MCF 10A (cell line): ENCODE measurements at regions of chr1 and their contacts with region 1.

Region 1: DNA sequence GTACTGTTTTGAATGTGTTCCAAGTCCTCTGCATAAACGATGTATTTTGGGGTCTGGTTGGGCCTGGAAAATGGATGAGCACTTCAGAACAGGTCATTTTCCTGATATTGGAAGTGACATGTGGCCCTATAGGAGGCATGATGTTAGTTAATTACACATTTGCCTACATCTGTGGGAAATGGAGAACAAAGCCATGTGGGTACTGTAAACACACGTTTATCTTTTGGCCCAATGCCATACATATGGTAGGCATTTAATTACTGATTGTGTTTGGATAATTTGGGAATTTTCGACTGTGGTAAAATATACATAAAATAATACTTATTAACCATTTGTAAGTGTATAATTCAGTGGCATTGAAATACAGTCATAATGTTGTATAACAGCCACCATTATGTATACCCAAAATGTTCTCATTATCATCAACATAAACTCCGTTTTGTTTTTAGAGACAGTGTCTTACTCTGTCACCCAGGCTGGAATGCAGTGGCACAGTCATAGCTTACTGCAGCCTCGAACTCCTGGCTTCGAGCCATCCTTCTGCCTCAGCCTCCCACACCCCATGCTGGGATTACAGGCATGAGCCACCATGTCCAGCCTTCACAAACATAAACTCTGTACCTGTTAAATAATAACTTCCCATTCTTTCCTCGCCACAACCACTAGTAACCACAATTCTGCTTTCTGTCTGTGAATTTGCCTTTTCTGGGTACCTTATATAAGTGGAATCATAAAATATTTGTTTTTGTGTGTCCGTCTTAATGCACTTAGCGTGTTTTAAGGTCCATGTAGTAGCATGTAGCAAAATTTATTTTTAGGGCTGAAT is 11.9 kb upstream of the RNPEP start:
- DNase-seq: no peak
- H3K4me3 Mint-ChIP-seq: no peak overlapping the region
- H3K27ac Mint-ChIP-seq: no peak overlapping the region
- H3K4me1 Mint-ChIP-seq: peaks cover 15% of the 10 kb centered on the region
- H3K27me3 Mint-ChIP-seq: peaks cover 8% of the 10 kb centered on the region
- CTCF ChIP-seq: no peak

Region 2: DNA sequence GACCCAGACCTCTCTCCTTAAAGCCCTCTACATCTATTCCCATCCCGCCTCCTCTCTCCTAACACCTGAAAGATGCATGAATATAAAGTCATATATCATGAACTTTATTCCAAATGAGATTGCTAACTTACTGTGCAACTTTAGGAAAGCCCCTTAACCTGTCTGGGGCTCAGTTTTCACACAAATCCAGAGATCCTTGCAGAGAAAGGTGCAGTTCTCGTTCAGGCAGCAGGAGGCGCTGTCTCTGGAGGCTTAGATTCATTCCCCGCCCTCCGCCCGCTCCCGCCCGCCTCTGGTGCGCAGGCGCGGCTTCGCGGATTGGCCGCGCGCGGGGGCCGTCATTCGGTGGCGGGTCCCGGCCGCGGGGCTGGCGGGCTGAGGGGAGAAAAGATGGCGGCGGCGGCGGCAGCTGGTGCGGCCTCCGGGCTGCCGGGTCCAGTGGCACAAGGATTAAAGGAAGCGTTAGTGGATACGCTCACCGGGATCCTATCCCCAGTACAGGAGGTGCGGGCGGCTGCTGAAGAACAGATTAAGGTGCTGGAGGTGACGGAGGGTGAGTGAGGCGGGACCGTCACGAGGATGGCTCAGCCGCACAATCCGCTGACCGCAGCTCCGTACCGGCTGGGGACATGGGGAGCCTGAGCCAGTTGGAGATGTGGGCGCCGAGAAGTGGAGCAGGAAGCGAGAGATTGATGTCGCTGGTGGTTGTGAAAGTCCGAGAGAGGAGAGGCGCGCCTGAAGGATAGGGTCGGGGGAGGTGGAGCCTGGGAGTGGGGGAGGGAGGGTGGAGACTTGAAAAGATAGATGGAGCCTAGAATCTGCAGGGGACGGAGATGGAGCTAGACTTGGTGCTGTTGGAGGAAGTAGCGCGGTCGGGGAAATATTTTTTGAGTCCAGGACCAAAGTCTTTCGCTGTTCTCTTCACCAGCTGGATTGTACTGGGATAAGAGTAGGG is 141.4 kb before region 1 on chr1 and contains the start of gene IPO9:
- CTCF ChIA-PET with region 1: interaction called, 15 read pairs
- POLR2A ChIA-PET with region 1: interaction called, 4 read pairs
- intact Hi-C with region 1: loop called (anchors 1 kb)
- DNase-seq: peak; percentile 98
- H3K4me3 Mint-ChIP-seq: peak within 1 kb of the TSS; percentile 100
- H3K27ac Mint-ChIP-seq: peak within 1 kb of the TSS; percentile 94
- H3K4me1 Mint-ChIP-seq: peaks cover 46% of the 10 kb centered on the region
- H3K27me3 Mint-ChIP-seq: no peaks in the 10 kb centered on the region
- CTCF ChIP-seq: peak; percentile 100
- total RNA-seq, gene IPO9: 112 and 117 TPM in 2 replicates

Region 3: GRCh38 chr1:201916649-201917249 is 53.8 kb before region 1 on chr1:
- CTCF ChIA-PET with region 1: interaction called, 10 read pairs
- POLR2A ChIA-PET with region 1: interaction called, 3 read pairs
- intact Hi-C with region 1: no loop called
- DNase-seq: peak; percentile 100
- H3K4me3 Mint-ChIP-seq: no peak overlapping the region
- H3K27ac Mint-ChIP-seq: no peak overlapping the region
- H3K4me1 Mint-ChIP-seq: peaks cover 34% of the 10 kb centered on the region
- H3K27me3 Mint-ChIP-seq: peaks cover 11% of the 10 kb centered on the region
- CTCF ChIP-seq: no peak

Region 4: GRCh38 chr1:201982623-201983379 is 12.3 kb after region 1 on chr1 and contains the start of gene RNPEP:
- CTCF ChIA-PET with region 1: interaction called, 24 read pairs
- POLR2A ChIA-PET with region 1: interaction called, 46 read pairs
- intact Hi-C with region 1: no loop called
- DNase-seq: peak; percentile 94
- H3K4me3 Mint-ChIP-seq: peak within 1 kb of the TSS; percentile 90
- H3K27ac Mint-ChIP-seq: peak within 1 kb of the TSS; percentile 66
- H3K4me1 Mint-ChIP-seq: peaks cover 24% of the 10 kb centered on the region
- H3K27me3 Mint-ChIP-seq: no peaks in the 10 kb centered on the region
- CTCF ChIP-seq: peak; percentile 30
- total RNA-seq, gene RNPEP: 147 and 155 TPM in 2 replicates

Region 5: GRCh38 chr1:202112839-202113672 is 142.5 kb after region 1 on chr1:
- CTCF ChIA-PET with region 1: interaction called, 18 read pairs
- POLR2A ChIA-PET with region 1: no interaction called
- intact Hi-C with region 1: no loop called
- DNase-seq: peak; percentile 27
- H3K4me3 Mint-ChIP-seq: no peak overlapping the region
- H3K27ac Mint-ChIP-seq: no peak overlapping the region
- H3K4me1 Mint-ChIP-seq: peaks cover 31% of the 10 kb centered on the region
- H3K27me3 Mint-ChIP-seq: no peaks in the 10 kb centered on the region
- CTCF ChIP-seq: no peak